ENCODE measurements at regions of chr1 and their contacts with region 1.

Region 1: DNA sequence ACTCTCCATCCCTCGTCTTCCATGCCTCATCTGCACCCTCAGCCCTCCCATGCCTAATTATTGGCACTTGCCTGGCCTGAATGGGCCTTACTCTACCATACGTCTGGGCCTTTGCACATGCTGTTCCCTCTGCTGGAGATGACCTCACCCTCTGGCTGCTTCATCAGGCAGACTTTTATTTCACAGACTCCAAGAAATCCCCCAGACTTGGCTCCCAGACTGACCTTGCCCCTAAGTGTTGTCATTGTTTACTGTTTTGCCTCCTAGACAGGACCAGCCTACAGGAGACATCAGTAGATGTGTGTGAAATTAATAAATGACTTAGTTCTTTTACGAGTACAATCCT is 5.2 kb upstream of the AHDC1 start:
- DNase-seq: no peak
- H3K4me3 ChIP-seq: no peak overlapping the region
- H3K27me3 ChIP-seq: peaks cover 3% of the 10 kb centered on the region
- CTCF ChIP-seq: no peak

Region 2: DNA sequence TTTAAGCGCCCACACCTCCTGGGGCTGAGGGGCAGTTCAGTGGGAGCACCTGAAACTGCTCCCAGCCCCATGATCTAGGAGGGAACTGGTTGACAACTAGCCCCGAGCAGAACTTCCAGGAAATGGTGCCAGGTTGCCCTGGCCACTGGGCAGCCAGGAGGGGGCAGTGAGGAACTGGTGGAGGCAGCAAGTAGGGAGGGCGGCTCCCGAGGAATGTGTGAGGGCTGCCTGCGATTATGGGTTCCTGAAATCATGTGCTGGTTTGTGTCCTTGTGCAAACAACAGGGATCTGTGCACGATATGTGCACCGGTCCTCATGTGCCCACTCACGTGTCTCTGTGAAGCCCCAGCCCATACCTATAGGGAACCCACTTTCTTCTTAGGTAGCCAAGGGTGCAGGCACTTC is 206.8 kb before region 1 on chr1:
- CTCF ChIA-PET with region 1: interaction called, 92 read pairs
- POLR2A ChIA-PET with region 1: no interaction called
- DNase-seq: no peak
- H3K4me3 ChIP-seq: no peak overlapping the region
- H3K27me3 ChIP-seq: no peaks in the 10 kb centered on the region
- CTCF ChIP-seq: peak; percentile 79

Region 3: GRCh38 chr1:27656157-27656893 is 47.1 kb after region 1 on chr1:
- CTCF ChIA-PET with region 1: interaction called, 223 read pairs
- POLR2A ChIA-PET with region 1: no interaction called
- DNase-seq: peak; percentile 47
- H3K4me3 ChIP-seq: no peak overlapping the region
- H3K27me3 ChIP-seq: no peaks in the 10 kb centered on the region
- CTCF ChIP-seq: no peak